Activated CD8-positive, alpha-beta T cell treated with anti-CD3 and anti-CD28 coated beads for 36 hours (primary cell): ENCODE measurements at regions of chr2 and their contacts with region 1.

Region 1: DNA sequence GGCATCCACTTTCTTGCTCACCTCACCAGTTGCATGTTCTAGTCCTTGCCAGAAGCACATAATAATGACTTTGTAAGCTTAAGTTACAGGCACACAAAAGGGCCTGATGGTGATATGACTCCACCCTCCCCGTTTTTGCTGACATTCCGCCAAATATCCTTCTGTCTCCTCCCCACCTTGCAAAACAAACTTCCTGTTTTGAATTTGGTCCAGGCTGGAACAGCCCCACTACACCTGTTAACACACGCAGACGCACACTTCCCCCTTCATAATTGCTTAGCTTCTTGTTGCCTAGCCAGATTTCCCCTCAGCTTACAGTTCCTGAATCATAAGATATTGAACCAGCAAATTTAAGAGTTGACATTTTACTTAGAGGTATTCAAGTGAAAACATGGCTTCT is at the start of gene MGAT5:
- DNase-seq: no peak
- ATAC-seq: no peak
- H3K4me3 Mint-ChIP-seq: no peak within 1 kb of the TSS
- H3K27ac Mint-ChIP-seq: peak within 1 kb of the TSS; percentile 18
- H3K4me1 Mint-ChIP-seq: peaks cover 89% of the 10 kb centered on the region
- H3K27me3 Mint-ChIP-seq: no peaks in the 10 kb centered on the region
- CTCF ChIP-seq: no peak
- total RNA-seq, gene MGAT5: 36.9 to 42.2 TPM

Region 2: GRCh38 chr2:134232868-134233727 is 20.7 kb before region 1 on chr2:
- CTCF ChIA-PET with region 1: interaction called, 5 read pairs
- POLR2A ChIA-PET with region 1: interaction called, 4 read pairs
- intact Hi-C with region 1: loop called (anchors 2 kb)
- DNase-seq: no peak
- ATAC-seq: peak; percentile 67
- H3K4me3 Mint-ChIP-seq: peak overlapping the region; percentile 2
- H3K27ac Mint-ChIP-seq: peak overlapping the region; percentile 90
- H3K4me1 Mint-ChIP-seq: peaks cover 78% of the 10 kb centered on the region
- H3K27me3 Mint-ChIP-seq: no peaks in the 10 kb centered on the region
- CTCF ChIP-seq: peak; percentile 19

Region 3: GRCh38 chr2:134290358-134290757 is 36.6 kb after region 1 on chr2:
- CTCF ChIA-PET with region 1: interaction called, 5 read pairs
- POLR2A ChIA-PET with region 1: interaction called, 3 read pairs
- intact Hi-C with region 1: loop called (anchors 5 kb)
- DNase-seq: peak; percentile 35
- ATAC-seq: peak; percentile 56
- H3K4me3 Mint-ChIP-seq: no peak overlapping the region
- H3K27ac Mint-ChIP-seq: no peak overlapping the region
- H3K4me1 Mint-ChIP-seq: peaks cover 25% of the 10 kb centered on the region
- H3K27me3 Mint-ChIP-seq: no peaks in the 10 kb centered on the region
- CTCF ChIP-seq: no peak